SK-MEL-5 (cell line): ENCODE measurements at regions of chr15 and their contacts with region 1.

Region 1: GRCh38 chr15:25883463-25884259 is 20.5 kb upstream of the ATP10A start:
- DNase-seq: no peak

Region 2: GRCh38 chr15:25805031-25805430 is 78.6 kb before region 1 on chr15:
- in situ Hi-C with region 1: no loop called
- DNase-seq: no peak

Region 3: DNA sequence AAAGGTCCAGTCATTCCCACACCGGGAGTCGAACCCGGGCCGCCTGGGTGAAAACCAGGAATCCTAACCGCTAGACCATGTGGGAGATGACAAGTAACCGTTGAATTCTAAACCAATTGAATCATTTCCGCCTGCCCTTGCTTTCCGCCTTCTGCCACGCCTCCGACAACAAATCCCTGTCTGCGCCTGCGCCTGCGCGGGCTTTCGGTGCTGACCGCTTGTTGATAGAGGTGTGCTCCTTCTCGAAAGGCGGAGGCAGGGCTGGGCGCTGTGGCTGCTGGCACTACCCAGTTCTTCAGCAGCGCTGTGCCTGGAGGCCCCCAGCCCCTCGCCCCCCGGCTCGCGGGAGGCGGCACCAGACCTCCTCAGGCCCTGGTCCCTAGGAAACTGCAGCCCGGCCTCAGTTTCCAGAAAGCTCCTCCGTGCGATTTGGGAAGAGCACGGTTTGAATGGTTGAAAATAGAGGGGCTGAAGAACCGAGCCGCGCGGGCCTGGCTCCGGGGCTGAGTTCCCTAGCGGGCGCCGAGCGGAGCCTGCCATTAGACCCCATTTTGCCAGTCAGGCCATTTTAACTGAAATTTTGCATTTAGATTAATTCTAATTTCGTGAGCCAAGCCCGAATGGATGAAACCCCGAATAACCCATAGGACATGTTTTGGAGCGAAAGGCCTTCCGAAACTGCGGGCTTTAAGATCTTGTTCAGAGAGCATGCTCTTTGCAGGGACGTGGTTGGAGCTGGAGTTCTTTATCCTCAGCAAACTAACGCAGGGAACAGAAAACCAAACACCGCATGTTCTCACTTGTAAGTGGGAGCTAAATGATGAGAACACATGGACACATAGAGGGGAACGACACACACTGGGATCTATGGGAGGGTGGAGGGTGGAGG is 198.8 kb after region 1 on chr15:
- in situ Hi-C with region 1: loop called (anchors 25 kb)
- DNase-seq: peak; percentile 97